Left cardiac atrium (tissue), 4 donors: ENCODE measurements at regions of chr1 and their contacts with region 1.

Region 1: GRCh38 chr1:222465211-222466041 is 82.5 kb downstream of the HHIPL2 start:
- DNase-seq: peak; percentile 93
- ATAC-seq: peak; percentile 99 to 100

Region 2: GRCh38 chr1:222634180-222635013 is 169.0 kb after region 1 on chr1:
- intact Hi-C with region 1: loop called (anchors 1 to 5 kb)
- DNase-seq: no peak
- ATAC-seq: peak; percentile 72 to 76

Region 3: DNA sequence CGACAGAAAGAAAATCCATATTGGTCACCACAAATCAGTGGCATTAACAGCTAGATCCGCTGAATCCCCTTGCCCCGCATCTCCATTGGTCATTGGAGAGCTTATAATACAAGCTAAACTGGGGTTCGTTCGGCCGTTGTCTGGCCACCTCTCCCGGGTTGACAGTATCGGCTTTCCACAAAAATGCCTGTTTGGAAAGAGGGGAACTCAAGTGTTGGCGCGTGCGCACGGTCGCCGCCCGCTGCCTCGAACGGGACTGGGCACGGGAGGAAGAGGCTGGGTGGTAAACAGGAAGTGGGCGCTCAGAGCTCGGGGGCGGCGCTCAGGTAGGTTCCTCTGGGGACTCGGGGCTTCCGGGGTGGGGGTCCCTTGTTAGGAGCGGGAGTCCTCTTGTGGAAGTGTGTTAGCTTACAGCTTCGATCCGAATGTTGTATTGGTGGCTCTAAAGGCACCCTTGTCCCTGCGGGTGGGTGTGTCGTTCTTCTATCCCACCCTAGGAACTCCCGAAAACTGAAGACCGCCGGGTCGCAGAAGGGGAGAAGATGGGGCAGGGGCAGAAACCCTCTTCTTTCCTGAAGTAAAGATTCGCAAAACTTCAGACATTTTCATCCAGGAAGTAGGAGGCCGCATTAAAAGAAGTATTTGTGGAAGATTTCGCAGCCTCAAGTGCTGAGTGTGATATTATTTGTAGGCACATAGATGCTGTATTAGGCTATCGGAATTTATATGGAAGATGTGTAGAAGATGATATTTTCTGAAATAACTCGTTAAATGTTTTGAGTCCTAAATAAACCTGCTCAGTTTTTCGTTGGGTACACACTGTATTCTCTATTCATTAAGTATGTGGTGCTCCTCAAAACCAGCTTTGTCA is 247.9 kb after region 1 on chr1:
- intact Hi-C with region 1: loop called in 1 of 2 experiments (anchors 10 kb)
- DNase-seq: peak; percentile 94
- ATAC-seq: peak; percentile 89 to 90